Cardiac septum (tissue), 1 donor: ENCODE measurements at regions of chr12 and their contacts with region 1.

Region 1: DNA sequence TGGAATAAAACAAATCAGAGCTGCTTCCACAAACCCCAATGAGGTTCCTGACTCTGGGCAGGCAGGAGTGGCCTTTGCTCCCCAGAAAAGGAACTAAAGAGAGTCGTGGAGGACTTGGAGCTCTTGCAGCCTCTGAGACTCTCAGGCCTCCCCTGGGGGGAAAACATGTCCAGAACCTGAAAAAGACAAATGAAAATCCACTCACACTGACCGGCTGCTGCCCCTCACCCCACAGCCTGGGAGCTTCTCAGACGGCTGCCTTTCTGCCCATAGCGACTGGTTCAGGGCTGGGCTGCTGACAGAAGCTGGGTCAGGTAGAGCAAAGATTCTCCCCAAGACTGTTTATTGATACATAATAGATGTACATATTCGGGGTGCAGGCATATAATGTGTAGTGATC is 356.0 kb downstream of the ADGRD1 start:
- DNase-seq: peak; percentile 38

Region 2: DNA sequence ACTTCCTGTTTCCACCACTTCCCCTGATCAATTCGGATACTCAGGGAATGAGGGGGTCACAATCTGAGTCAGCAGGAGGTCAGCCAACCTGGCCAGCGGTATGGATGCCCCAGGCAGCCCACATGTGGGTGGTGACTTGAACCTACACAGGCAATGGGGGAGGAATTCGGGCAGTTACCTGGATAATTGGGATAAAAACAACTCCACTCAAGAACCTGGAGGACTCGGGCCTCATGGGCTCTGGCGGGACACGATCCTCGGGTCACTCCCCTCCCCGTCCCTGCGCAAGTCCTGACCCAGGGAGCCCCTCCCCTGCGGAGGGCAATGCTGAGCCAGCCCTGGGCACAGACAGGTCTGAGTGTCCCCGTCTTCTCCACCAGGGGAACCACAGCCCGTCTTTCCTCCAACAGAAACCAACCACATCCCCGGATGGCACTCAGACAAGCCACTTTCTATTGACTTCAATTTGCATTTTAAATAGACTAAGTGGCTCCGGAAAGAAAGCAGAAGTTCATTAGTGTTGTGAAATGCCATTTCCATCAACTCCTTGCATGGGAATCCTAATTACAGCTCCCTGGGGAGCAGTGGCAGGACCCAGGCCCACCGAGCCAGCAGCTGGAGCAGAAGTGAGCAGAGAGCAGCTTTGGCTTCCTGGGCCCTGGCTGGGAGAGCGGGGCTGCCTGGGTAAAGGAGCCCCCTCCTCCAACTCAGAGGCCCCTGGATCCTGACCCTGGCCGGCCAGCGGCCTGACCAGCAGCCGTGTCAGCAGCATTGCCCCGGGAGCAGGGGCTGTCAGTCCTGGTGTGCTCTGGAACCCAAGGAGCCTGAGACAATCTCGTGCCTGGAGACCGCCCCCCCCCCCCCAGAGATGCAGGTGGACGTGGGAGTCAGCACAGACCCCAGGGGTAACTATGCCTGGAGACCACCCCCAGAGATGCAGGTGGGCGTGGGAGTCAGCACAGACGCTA is 18.1 kb after region 1 on chr12:
- intact Hi-C with region 1: no loop called
- DNase-seq: no peak

Region 3: DNA sequence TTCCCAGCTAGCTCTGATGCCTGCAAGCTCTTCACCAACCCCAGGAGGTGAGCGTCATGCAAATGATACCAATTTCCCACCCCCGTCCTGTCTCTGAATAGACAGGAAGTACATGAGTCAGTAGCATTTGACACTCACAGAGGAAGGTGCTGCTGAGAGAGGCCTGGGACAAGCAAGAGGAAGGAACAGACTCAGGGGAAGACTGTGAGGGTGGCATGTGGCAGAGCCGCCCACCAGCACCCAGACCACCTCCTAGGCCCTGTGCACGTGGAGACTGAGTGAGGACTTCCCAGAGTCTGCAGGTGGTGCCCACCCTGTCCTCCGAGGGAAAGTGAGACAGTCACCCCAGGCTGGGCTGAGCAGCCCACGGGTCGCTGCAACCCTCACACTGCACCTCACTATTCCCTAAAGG is 201.7 kb after region 1 on chr12:
- intact Hi-C with region 1: no loop called
- DNase-seq: no peak

Region 4: DNA sequence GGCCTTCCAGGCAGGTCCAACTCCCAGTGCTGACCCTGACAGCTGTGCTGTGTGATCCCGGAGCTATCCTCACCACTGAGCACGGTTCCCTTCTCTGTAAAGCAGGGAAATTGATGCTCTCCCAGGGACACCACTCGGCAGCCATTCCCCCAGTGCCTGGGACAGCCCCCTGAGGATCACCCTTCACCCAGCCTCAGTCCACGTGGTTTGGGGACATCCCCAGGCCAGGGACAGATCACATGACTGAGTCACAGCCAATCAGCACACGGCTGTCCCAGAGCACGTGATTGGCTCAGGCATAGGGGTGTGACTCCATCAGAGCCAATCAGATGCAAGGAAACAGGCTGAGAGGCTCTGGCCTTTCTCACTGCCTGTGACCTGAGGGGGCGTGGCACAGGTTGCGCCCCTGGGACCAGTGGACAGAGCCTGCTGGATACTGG is 332.4 kb after region 1 on chr12:
- intact Hi-C with region 1: loop called (anchors 5 kb)
- DNase-seq: no peak